Sciatic nerve (tissue), 2 donors: ENCODE measurements at regions of chr6 and their contacts with region 1.

Region 1: GRCh38 chr6:117227245-117227962 is 38.0 kb upstream of the VGLL2 start:
- DNase-seq: no peak
- ATAC-seq: no peak

Region 2: GRCh38 chr6:115358616-115359015 is 1868.8 kb before region 1 on chr6:
- intact Hi-C with region 1: loop called (anchors 10 kb)
- DNase-seq: no peak
- ATAC-seq: no peak